ENCODE measurements at regions of chr11 and their contacts with region 1.

Region 1: GRCh38 chr11:33065445-33066178 is 26.2 kb downstream of the TCP11L1 start:
- DNase-seq: peak; percentile 87
- ATAC-seq: peak; percentile 76
- H3K4me3 Mint-ChIP-seq: no peak overlapping the region
- H3K27ac Mint-ChIP-seq: no peak overlapping the region
- H3K4me1 Mint-ChIP-seq: peaks cover 45% of the 10 kb centered on the region
- H3K27me3 Mint-ChIP-seq: no peaks in the 10 kb centered on the region

Region 2: GRCh38 chr11:32713496-32713895 is 352.1 kb before region 1 on chr11:
- CTCF ChIA-PET with region 1: interaction called, 4 read pairs
- POLR2A ChIA-PET with region 1: no interaction called
- intact Hi-C with region 1: loop called in 1 of 2 experiments (anchors 10 kb)
- DNase-seq: peak; percentile 11
- ATAC-seq: no peak
- H3K4me3 Mint-ChIP-seq: no peak overlapping the region
- H3K27ac Mint-ChIP-seq: no peak overlapping the region
- H3K4me1 Mint-ChIP-seq: no peaks in the 10 kb centered on the region
- H3K27me3 Mint-ChIP-seq: peaks cover 16% of the 10 kb centered on the region

Region 3: DNA sequence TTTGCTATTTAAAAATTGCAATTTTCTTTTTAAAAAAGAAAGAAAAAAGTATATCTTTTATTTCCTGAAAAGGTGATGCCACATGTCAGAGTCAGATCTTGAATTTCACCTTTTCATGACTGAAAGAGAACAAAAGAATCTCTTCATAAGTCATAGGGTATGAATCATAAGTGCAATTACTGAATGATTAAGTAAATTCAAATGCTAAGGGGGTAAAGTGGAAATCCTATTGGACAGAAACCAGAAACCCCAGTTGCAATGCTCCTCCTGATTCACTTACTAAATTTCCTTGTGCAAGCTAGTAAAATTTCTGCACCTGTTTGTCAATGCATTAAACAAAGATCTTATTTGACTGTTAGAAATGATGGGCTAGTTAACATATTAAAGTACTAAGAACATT is 244.1 kb before region 1 on chr11:
- CTCF ChIA-PET with region 1: interaction called, 5 read pairs
- POLR2A ChIA-PET with region 1: no interaction called
- intact Hi-C with region 1: loop called in 1 of 2 experiments (anchors 5 kb)
- DNase-seq: no peak
- ATAC-seq: peak; percentile 66
- H3K4me3 Mint-ChIP-seq: no peak overlapping the region
- H3K27ac Mint-ChIP-seq: no peak overlapping the region
- H3K4me1 Mint-ChIP-seq: peaks cover 24% of the 10 kb centered on the region
- H3K27me3 Mint-ChIP-seq: no peaks in the 10 kb centered on the region

Region 4: GRCh38 chr11:32983506-32983905 is 82.1 kb before region 1 on chr11:
- CTCF ChIA-PET with region 1: interaction called, 16 read pairs
- POLR2A ChIA-PET with region 1: interaction called, 6 read pairs
- intact Hi-C with region 1: no loop called
- DNase-seq: no peak
- ATAC-seq: no peak
- H3K4me3 Mint-ChIP-seq: no peak overlapping the region
- H3K27ac Mint-ChIP-seq: no peak overlapping the region
- H3K4me1 Mint-ChIP-seq: no peaks in the 10 kb centered on the region
- H3K27me3 Mint-ChIP-seq: no peaks in the 10 kb centered on the region

Region 5: GRCh38 chr11:33021937-33022336 is 43.7 kb before region 1 on chr11:
- CTCF ChIA-PET with region 1: interaction called, 16 read pairs
- POLR2A ChIA-PET with region 1: no interaction called
- intact Hi-C with region 1: no loop called
- DNase-seq: no peak
- ATAC-seq: peak; percentile 84
- H3K4me3 Mint-ChIP-seq: no peak overlapping the region
- H3K27ac Mint-ChIP-seq: no peak overlapping the region
- H3K4me1 Mint-ChIP-seq: peaks cover 18% of the 10 kb centered on the region
- H3K27me3 Mint-ChIP-seq: peaks cover 15% of the 10 kb centered on the region